ENCODE measurements at regions of chr15 and their contacts with region 1.

Region 1: GRCh38 chr15:96356494-96357455 is 26.3 kb downstream of the NR2F2 start:
- DNase-seq: peak; percentile 88
- ATAC-seq: peak; percentile 87
- H3K4me3 Mint-ChIP-seq: peak overlapping the region; percentile 71
- H3K27ac Mint-ChIP-seq: no peak overlapping the region
- H3K4me1 Mint-ChIP-seq: peaks cover 20% of the 10 kb centered on the region
- H3K27me3 Mint-ChIP-seq: peaks cover 65% of the 10 kb centered on the region

Region 2: GRCh38 chr15:96053031-96053780 is 303.6 kb before region 1 on chr15:
- CTCF ChIA-PET with region 1: no interaction called
- POLR2A ChIA-PET with region 1: no interaction called
- intact Hi-C with region 1: no loop called
- DNase-seq: peak; percentile 4
- ATAC-seq: no peak
- H3K4me3 Mint-ChIP-seq: no peak overlapping the region
- H3K27ac Mint-ChIP-seq: no peak overlapping the region
- H3K4me1 Mint-ChIP-seq: peaks cover 3% of the 10 kb centered on the region
- H3K27me3 Mint-ChIP-seq: peaks cover 40% of the 10 kb centered on the region

Region 3: DNA sequence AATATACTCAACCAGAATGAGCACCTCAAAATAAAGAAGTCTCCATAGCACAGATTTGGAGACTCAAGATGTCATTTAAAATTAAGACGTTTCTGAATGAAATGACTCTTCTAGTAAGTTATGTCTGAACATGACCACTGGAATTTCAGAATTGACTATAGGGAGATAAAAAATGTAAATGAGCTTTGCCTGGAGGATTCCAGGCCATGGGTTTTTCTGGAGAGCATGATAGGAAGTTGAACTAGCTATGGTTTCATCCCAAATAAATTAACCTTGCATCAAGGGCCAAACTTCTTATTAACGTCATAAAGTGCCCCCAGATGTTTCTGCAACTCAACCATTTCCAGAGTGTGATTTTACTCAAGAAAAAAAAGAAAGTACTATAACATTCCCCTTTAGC is 248.9 kb before region 1 on chr15:
- CTCF ChIA-PET with region 1: no interaction called
- POLR2A ChIA-PET with region 1: no interaction called
- intact Hi-C with region 1: no loop called
- DNase-seq: no peak
- ATAC-seq: no peak
- H3K4me3 Mint-ChIP-seq: no peak overlapping the region
- H3K27ac Mint-ChIP-seq: no peak overlapping the region
- H3K4me1 Mint-ChIP-seq: no peaks in the 10 kb centered on the region
- H3K27me3 Mint-ChIP-seq: peaks cover 2% of the 10 kb centered on the region

Region 4: GRCh38 chr15:96381463-96381862 is 24.7 kb after region 1 on chr15:
- CTCF ChIA-PET with region 1: no interaction called
- POLR2A ChIA-PET with region 1: no interaction called
- intact Hi-C with region 1: no loop called
- DNase-seq: no peak
- ATAC-seq: no peak
- H3K4me3 Mint-ChIP-seq: no peak overlapping the region
- H3K27ac Mint-ChIP-seq: no peak overlapping the region
- H3K4me1 Mint-ChIP-seq: no peaks in the 10 kb centered on the region
- H3K27me3 Mint-ChIP-seq: peaks cover 2% of the 10 kb centered on the region

Region 5: GRCh38 chr15:96409215-96410138 is 52.7 kb after region 1 on chr15:
- CTCF ChIA-PET with region 1: no interaction called
- POLR2A ChIA-PET with region 1: no interaction called
- intact Hi-C with region 1: loop called in 1 of 2 experiments (anchors 5 kb)
- DNase-seq: peak; percentile 8
- ATAC-seq: no peak
- H3K4me3 Mint-ChIP-seq: no peak overlapping the region
- H3K27ac Mint-ChIP-seq: no peak overlapping the region
- H3K4me1 Mint-ChIP-seq: peaks cover 3% of the 10 kb centered on the region
- H3K27me3 Mint-ChIP-seq: peaks cover 65% of the 10 kb centered on the region

Region 6: DNA sequence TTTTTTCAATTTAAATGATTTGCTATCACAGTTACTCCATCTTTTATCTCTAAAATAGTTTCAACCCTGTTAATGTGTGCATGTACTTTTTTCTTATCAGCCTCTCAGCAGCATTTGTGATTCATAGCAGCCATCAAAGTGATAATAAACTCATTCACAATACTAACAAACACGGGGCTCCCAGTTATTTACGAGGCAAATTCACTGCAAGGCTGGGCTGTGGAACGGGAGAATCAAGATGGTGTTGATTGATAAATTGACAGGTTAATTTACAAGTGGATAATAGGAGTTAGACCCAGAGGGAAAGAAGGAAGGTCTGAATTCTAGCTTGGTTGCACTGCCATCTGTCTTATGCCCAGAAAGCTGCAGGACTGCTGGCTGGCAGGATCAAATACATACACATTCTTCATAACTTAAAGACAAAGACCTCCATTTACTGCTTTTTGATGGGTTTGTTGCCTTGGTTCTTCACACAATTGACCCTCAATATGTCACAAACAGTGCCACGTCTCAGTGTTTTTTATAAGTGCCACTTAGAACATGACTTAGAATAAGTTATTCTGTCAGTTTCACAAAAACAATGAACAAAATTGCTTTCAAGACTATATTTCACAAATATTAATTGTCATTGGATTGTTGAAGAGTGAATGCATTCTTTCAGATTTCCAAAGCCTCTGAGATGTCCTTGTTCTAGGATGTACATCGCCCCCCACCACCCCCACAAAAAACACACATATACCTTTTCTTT is 536.6 kb after region 1 on chr15:
- CTCF ChIA-PET with region 1: no interaction called
- POLR2A ChIA-PET with region 1: no interaction called
- intact Hi-C with region 1: loop called in 1 of 2 experiments (anchors 10 kb)
- DNase-seq: peak; percentile 5
- ATAC-seq: no peak
- H3K4me3 Mint-ChIP-seq: no peak overlapping the region
- H3K27ac Mint-ChIP-seq: no peak overlapping the region
- H3K4me1 Mint-ChIP-seq: peaks cover 14% of the 10 kb centered on the region
- H3K27me3 Mint-ChIP-seq: no peaks in the 10 kb centered on the region

Region 7: GRCh38 chr15:97234851-97235610 is 878.3 kb after region 1 on chr15:
- CTCF ChIA-PET with region 1: interaction called, 6 read pairs
- POLR2A ChIA-PET with region 1: no interaction called
- intact Hi-C with region 1: loop called (anchors 1 to 10 kb)
- DNase-seq: peak; percentile 49
- ATAC-seq: no peak
- H3K4me3 Mint-ChIP-seq: no peak overlapping the region
- H3K27ac Mint-ChIP-seq: no peak overlapping the region
- H3K4me1 Mint-ChIP-seq: no peaks in the 10 kb centered on the region
- H3K27me3 Mint-ChIP-seq: peaks cover 8% of the 10 kb centered on the region

Measured in activated CD4-positive, alpha-beta T cell treated with anti-CD3 and anti-CD28 coated beads for 36 hours (primary cell).